GM18951 (cell line): ENCODE measurements at regions of chr14 and their contacts with region 1.

Region 1: GRCh38 chr14:34331728-34332623 is 130.1 kb downstream of the SPTSSA start:
- POLR2A ChIP-seq: no peak

Region 2: DNA sequence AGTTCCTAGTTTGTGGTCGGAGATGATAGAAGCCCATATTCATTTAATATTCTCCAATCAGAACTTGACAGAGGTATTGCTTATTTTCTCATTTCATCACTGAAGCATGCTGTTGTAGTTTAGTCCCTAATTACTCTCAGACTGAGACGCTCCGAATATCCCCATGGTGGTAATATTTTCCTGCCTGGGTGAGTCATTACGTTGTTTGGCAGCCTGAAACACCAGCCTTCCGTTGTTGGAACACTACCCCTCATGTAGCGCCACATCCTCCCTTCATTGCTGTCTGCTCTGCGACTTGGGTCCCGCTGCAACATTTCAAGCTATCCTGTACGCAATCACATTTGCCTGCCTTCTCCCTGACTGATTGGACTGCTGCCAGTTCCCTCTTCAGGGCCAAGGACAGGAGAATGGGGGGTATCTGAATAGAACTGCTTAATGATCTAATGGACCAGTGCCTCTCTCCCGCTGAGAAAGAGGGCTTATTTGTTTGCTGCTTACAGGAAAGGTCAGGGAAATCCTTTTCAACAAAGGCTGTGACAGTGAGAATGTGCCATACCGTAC is 1024.2 kb before region 1 on chr14:
- in situ Hi-C with region 1: no loop called
- POLR2A ChIP-seq: no peak

Region 3: DNA sequence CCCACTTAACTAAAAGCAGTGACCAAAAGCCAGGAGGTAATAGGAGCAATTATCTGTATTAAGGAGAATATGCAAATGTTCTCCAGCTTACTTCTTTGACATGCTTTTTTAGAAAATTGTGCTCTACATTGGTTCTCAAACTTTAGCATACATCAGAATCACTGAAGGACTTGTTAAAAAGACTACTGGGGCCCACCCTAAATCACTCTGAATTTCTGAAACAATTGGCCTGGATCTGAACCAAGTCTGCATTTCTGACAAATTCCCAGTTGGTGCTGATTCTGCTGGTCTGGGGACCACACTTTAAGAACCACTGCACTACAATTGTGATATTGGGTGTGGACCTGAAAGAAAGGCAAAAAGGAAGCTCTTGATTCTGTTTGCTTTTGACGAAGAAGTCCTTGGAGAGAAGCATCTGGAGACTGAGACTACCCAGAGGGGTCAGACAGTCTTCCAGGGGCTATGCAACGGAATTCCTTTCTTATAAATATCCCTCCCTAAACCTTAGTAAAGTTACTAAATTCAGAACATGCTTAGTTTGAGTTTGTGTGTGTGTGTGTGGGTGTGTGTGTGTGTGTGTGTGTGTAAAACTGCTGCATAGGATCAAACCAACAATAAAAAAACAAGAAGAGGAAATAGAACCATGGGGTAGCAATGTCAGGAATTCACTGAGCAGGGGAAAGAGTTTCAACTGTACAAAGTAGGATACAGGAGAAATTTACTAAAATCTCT is 170.7 kb after region 1 on chr14:
- in situ Hi-C with region 1: loop called (anchors 10 kb)
- POLR2A ChIP-seq: no peak